Breast epithelium (tissue), 4 donors: ENCODE measurements at regions of chr16 and their contacts with region 1.

Region 1: DNA sequence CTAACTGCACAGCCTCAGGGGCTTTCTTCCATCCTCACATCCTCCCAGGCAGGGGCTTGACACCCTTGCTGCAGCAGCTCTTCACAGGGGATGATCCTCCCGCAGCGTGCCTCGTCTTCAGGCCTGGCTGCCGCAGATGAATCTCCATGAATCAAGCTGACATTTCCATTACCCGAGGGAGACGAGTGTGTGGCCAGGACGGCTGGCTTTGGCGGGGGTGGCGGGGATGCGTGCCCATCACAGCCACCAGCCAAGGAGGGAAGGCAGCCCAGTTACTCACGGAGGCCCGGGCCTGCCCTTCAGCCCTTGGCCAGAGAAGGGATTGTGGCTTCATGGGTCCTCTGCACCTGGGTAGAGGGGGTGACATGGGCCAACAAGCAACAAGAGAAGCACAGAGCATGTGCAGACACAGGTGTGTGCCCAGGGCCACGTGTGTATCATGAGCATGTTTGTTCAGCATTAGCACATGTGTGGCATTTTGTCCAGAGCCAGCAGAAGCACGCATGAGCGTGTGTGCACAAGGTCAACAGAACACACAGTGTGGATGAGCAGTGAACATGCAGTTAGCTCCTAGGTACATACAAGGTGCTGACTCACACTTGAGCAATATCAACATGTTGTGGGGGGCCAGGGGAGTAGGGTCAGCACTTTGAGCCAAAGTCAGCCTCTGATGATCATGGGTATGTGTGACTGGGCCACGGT is 236.4 kb downstream of the KATNIP start:
- DNase-seq: no peak
- H3K4me3 ChIP-seq: no peak overlapping the region
- H3K27ac ChIP-seq: no peak overlapping the region
- H3K4me1 ChIP-seq: no peaks in the 10 kb centered on the region
- H3K27me3 ChIP-seq: no peaks in the 10 kb centered on the region
- CTCF ChIP-seq: no peak
- POLR2A ChIP-seq: no peak

Region 2: DNA sequence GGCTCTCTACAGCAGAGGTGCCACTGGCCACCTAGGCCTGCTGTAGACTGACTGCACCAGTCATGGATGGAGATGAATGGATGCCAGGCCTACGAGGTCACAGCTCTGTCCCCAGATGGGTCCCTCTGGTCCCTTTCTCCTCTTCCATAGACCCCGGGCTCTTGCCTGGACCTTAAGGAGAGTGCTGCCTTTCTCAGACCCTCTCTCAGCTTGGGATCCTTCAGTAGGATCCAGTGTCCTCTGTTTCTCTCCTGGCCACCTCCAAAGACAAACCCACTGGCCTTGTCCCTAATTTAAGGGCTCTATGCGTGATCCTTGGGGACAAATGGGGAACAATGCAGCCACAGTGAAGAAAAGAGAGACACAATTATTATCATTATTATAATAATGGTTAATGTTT is 909.0 kb before region 1 on chr16:
- intact Hi-C with region 1: no loop called
- DNase-seq: no peak
- H3K4me3 ChIP-seq: no peak overlapping the region
- H3K27ac ChIP-seq: no peak overlapping the region
- H3K4me1 ChIP-seq: no peaks in the 10 kb centered on the region
- H3K27me3 ChIP-seq: no peaks in the 10 kb centered on the region
- CTCF ChIP-seq: no peak
- POLR2A ChIP-seq: no peak

Region 3: GRCh38 chr16:27751676-27752075 is 34.7 kb before region 1 on chr16:
- intact Hi-C with region 1: loop called (anchors 1 kb)
- DNase-seq: no peak
- H3K4me3 ChIP-seq: no peak overlapping the region
- H3K27ac ChIP-seq: no peak overlapping the region
- H3K4me1 ChIP-seq: no peaks in the 10 kb centered on the region
- H3K27me3 ChIP-seq: no peaks in the 10 kb centered on the region
- CTCF ChIP-seq: no peak
- POLR2A ChIP-seq: no peak

Region 4: DNA sequence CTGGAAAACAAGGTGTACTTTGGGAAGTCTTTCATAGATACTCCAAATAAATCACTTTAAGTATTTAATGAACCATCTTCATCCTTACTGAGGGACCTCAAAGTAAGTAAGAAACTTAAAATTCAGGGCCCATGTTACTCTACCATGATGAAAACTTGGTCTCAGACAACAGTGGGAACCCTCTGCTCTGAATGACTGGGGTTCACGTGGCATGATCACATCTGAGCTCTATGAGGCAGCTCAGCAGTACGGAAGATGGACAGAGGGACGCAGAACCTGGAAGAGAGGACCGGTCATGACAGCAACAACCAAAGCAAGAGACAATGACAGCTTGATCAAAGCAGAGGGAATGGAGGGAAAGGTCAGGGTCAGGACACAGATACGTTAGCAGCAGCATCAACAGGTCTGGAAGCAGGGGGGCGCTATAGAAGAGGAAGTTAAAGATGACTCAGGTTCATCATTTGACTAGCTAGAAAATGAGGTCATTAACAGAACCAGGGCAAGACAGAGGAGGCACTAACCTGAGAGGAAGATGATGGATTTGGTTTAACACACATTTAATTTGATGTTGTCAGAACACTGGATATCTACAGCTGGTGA is 415.9 kb after region 1 on chr16:
- intact Hi-C with region 1: no loop called
- DNase-seq: no peak
- H3K4me3 ChIP-seq: no peak overlapping the region
- H3K27ac ChIP-seq: no peak overlapping the region
- H3K4me1 ChIP-seq: no peaks in the 10 kb centered on the region
- H3K27me3 ChIP-seq: no peaks in the 10 kb centered on the region
- CTCF ChIP-seq: no peak
- POLR2A ChIP-seq: no peak